ENCODE measurements at regions of chr3 and their contacts with region 1.

Region 1: DNA sequence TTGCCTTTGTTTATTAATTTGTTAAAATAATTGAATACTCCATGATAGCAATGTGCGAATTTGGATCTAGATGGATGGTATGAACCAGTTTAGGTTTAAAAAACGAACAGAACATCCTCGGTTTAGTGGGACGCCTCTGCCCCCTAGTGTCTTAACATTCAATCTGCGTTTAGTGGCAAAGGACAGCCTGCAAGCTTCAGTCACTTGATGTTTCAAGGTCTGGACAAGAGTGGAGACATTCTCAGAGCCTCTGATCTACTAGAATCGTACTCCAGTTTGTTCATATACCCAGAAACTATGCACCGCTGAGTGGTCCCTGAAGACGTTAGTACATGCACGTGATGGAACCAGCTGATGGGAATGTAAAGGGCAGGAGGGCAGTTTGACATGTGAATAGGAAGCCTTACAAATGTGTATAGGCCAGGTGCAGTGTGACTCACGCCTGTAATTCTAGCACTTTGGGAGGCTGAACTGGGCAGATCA is 17.8 kb upstream of the ATP13A4 start:
- DNase-seq: peak; percentile 13
- H3K4me3 ChIP-seq: no peak overlapping the region
- H3K27ac ChIP-seq: no peak overlapping the region
- H3K27me3 ChIP-seq: peaks cover 6% of the 10 kb centered on the region
- CTCF ChIP-seq: peak; percentile 85

Region 2: DNA sequence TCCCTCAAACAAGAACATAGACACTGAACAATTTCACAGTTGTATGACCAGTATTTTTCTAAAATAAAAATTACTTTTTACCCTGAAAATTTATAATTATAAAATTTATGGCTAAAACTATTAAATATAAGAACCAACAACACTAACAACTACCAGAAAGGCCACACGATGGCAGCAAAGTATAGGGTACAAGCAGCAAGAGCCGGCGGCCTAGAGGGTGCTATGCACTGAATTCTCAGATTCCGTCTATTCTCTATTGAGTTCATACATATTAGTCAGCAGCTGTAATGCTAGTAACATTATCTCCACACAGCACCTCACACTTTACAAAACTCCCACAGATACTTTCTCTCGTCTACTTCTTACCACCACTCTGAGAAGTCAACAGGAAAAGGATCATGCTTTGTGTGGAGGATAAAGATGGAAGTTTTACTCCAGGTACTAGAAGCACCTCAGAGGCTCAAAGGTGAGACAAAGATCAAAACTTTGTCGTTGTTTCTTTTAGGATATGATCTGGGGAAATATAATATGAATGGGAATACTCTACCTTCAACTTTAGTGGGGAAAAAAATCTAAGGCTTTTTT is 1005.7 kb before region 1 on chr3:
- CTCF ChIA-PET with region 1: interaction called, 29 read pairs
- POLR2A ChIA-PET with region 1: no interaction called
- DNase-seq: peak; percentile 73
- H3K4me3 ChIP-seq: no peak overlapping the region
- H3K27ac ChIP-seq: no peak overlapping the region
- H3K27me3 ChIP-seq: peaks cover 2% of the 10 kb centered on the region
- CTCF ChIP-seq: peak; percentile 79

Region 3: GRCh38 chr3:193457526-193457925 is 114.9 kb before region 1 on chr3:
- CTCF ChIA-PET with region 1: interaction called, 19 read pairs
- POLR2A ChIA-PET with region 1: no interaction called
- DNase-seq: no peak
- H3K4me3 ChIP-seq: no peak overlapping the region
- H3K27ac ChIP-seq: no peak overlapping the region
- H3K27me3 ChIP-seq: no peaks in the 10 kb centered on the region
- CTCF ChIP-seq: no peak

Region 4: DNA sequence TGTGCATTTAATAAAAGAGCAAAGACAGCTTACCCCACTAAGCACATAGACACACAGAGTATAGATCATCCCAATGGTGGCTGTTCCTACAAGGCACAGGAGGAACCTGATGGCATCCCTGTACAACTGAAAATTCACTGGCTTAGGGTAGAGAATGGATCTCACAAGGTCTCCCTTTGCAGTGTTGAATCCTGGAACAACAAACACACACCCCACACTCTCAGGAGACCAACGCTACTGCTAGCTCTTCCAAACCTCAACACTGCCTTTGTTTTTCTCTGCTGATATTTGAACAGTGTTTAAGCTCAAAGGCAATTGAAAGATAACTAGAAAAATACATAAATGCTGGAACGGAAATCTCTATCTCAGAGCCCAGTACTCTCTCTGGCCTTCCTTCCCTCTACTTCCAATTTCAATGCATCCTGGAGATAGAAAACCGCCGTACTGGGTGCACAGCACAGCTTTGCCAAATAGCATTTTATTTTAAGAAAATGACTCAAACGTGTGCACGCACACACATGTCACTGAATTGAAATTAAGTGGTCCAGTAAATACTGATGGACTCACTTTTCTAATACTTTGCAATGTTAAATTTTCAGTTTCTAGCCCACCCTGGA is 106.4 kb before region 1 on chr3:
- CTCF ChIA-PET with region 1: interaction called, 19 read pairs
- POLR2A ChIA-PET with region 1: no interaction called
- DNase-seq: no peak
- H3K4me3 ChIP-seq: no peak overlapping the region
- H3K27ac ChIP-seq: no peak overlapping the region
- H3K27me3 ChIP-seq: no peaks in the 10 kb centered on the region
- CTCF ChIP-seq: no peak

Region 5: DNA sequence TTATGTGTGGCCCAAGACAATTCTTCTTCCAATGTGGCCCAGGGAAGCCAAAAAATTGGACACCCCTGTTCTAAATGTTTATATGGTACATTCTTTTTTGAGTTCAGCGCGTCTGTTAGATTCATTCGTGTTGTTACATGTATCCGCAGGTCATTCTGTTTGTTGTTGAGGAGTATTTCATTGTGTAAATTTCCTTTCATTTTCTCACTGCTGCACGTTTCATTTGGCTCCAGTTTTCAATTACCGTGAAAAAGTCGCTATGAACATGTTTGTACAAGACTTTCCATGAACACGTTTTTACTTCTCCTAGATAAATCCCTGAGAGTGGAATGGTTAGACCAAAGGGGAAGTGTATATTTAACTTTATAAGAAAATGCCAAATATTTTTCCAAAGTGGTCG is 13.1 kb after region 1 on chr3:
- CTCF ChIA-PET with region 1: interaction called, 10 read pairs
- POLR2A ChIA-PET with region 1: no interaction called
- DNase-seq: no peak
- H3K4me3 ChIP-seq: no peak overlapping the region
- H3K27ac ChIP-seq: no peak overlapping the region
- H3K27me3 ChIP-seq: peaks cover 3% of the 10 kb centered on the region
- CTCF ChIP-seq: no peak